ENCODE measurements at regions of chr15 and their contacts with region 1.

Region 1: GRCh38 chr15:51622604-51623370 is at the start of gene DMXL2:
- DNase-seq: peak; percentile 94
- H3K4me3 ChIP-seq: peak within 1 kb of the TSS; percentile 84
- H3K27ac ChIP-seq: peak within 1 kb of the TSS; percentile 76
- H3K4me1 ChIP-seq: peaks cover 13% of the 10 kb centered on the region
- H3K27me3 ChIP-seq: no peaks in the 10 kb centered on the region
- CTCF ChIP-seq: no peak
- total RNA-seq, gene DMXL2: 23.2 and 23.7 TPM in 2 replicates

Region 2: DNA sequence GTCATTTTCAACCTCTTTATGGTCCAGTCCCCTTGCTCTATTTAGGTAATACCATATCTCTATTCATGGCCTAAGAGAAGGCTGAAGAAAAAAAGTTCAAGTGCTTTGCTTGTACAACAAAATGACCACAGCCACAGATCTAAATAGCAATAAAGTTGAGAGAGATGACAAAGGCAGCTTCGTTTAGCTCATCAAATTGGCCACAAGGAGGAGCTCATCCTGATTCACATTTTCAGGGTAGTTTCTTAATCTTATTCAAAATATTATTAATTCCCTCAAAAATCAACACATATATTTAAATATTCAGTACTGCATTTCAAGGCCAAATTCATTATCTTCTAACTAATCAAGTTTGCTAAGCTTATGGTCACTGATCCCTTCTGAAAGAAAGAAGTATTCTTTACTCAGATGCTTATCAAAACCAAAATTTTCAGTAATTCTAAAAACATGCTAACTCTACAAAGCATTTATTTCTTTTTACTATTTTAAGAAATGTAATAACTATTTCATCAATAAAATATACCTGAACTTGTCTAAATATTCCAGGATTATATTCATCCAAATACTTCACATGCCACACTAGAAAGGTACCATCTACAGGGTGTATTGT is 85.7 kb before region 1 on chr15:
- CTCF ChIA-PET with region 1: interaction called, 4 read pairs
- POLR2A ChIA-PET with region 1: no interaction called
- intact Hi-C with region 1: loop called (anchors 5 kb)
- DNase-seq: peak; percentile 17
- H3K4me3 ChIP-seq: no peak overlapping the region
- H3K27ac ChIP-seq: no peak overlapping the region
- H3K4me1 ChIP-seq: no peaks in the 10 kb centered on the region
- H3K27me3 ChIP-seq: no peaks in the 10 kb centered on the region
- CTCF ChIP-seq: peak; percentile 77

Region 3: DNA sequence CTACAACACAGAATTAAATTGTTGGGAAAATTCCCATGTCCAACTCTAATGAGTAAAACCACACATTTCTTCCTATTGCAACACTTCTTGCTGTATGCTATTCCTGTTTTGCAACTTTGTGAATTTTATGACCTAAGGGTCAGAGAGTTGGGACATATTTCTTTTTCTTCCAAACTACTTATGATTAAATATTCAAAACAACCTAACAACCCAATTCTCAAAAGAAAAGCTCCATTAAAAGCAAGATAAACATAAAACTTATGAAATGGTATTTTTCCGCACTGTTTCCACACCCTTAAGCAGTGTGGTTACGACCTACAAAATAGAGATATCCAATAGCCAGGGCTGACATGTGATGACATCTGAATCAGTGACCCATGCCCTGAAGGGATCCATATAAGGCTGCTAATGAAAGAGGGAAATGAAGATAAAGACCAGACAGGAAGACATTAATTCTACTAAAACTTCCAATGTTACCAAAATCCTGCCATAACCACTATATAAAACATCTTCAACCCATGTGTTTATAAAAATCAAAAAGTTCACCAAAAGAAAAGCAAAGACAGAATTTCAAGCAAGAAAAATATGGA is 45.8 kb before region 1 on chr15:
- CTCF ChIA-PET with region 1: no interaction called
- POLR2A ChIA-PET with region 1: no interaction called
- intact Hi-C with region 1: loop called (anchors 5 kb)
- DNase-seq: peak; percentile 24
- H3K4me3 ChIP-seq: no peak overlapping the region
- H3K27ac ChIP-seq: no peak overlapping the region
- H3K4me1 ChIP-seq: peaks cover 9% of the 10 kb centered on the region
- H3K27me3 ChIP-seq: no peaks in the 10 kb centered on the region
- CTCF ChIP-seq: no peak

Measured in A673 (cell line).